ENCODE measurements at regions of chr10 and their contacts with region 1.

Region 1: GRCh38 chr10:10865303-10865702 is 152.4 kb upstream of the CELF2 start:
- DNase-seq: no peak
- ATAC-seq: no peak
- H3K4me3 ChIP-seq: no peak overlapping the region
- H3K4me3 Mint-ChIP-seq: no peak overlapping the region
- H3K27ac ChIP-seq: no peak overlapping the region
- H3K27ac Mint-ChIP-seq: no peak overlapping the region
- H3K4me1 ChIP-seq: no peaks in the 10 kb centered on the region
- H3K4me1 Mint-ChIP-seq: no peaks in the 10 kb centered on the region
- H3K27me3 ChIP-seq: no peaks in the 10 kb centered on the region
- H3K27me3 Mint-ChIP-seq: peaks cover 2% of the 10 kb centered on the region
- CTCF ChIP-seq: no peak

Region 2: DNA sequence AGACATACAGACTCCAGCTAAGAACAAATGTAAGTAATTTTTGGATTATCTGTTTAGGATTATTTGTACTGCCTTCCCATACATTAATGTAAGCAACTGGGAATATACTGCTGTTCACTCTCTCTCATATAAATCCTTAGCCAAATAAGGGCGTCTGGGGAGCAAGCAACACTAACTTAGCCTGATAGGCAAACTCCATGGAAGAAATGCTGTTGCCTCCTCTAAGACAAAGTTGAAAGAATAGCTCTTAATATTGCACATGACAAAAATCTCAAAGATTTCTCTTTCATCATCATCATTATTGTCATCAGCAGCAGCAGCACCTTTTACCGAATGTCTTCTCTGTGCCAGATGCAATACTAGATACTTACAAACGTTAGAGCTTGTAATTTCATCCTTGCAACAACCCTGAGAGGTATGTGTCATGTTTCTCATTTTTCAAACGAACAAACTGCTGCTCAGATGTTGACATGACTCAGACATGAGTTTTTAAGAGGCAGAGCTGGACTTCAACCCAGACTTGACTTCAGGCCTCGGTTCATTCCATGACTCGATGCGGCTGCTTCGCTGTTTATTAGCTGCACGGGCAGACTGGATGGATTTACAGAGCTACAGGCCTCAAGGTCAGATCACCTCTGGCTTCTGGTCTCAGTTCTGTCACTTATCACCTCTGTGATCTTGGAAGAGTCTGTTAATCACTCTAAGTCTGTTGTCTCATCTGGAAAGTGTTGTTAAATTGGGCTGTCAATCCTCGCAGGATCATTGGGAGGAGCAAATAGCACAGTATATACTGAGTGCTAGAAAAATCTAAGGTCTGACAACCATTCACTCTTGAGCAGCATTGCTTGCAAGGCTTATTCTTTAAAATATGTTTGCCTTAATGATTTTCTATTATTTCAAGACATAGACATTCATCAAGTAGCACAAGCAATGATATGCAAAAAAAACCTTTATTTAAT is 26.1 kb after region 1 on chr10:
- CTCF ChIA-PET with region 1: no interaction called
- POLR2A ChIA-PET with region 1: no interaction called
- intact Hi-C with region 1: loop called in 1 of 2 experiments (anchors 1 kb)
- DNase-seq: no peak
- ATAC-seq: no peak
- H3K4me3 ChIP-seq: no peak overlapping the region
- H3K4me3 Mint-ChIP-seq: no peak overlapping the region
- H3K27ac ChIP-seq: no peak overlapping the region
- H3K27ac Mint-ChIP-seq: no peak overlapping the region
- H3K4me1 ChIP-seq: no peaks in the 10 kb centered on the region
- H3K4me1 Mint-ChIP-seq: no peaks in the 10 kb centered on the region
- H3K27me3 ChIP-seq: no peaks in the 10 kb centered on the region
- H3K27me3 Mint-ChIP-seq: peaks cover 16% of the 10 kb centered on the region
- CTCF ChIP-seq: no peak